Posterior cingulate gyrus (tissue), 11 donors: ENCODE measurements at regions of chr22 and their contacts with region 1.

Region 1: GRCh38 chr22:25048659-25049647 is 96.4 kb downstream of the KIAA1671 start:
- DNase-seq: peak in 9 of 10 donors; percentile 44 to 93 (median 75)

Region 2: GRCh38 chr22:24938741-24939341 is 110.1 kb before region 1 on chr22:
- intact Hi-C with region 1: loop called (anchors 2 kb)
- DNase-seq: peak in 1 of 10 donors; percentile 8

Region 3: DNA sequence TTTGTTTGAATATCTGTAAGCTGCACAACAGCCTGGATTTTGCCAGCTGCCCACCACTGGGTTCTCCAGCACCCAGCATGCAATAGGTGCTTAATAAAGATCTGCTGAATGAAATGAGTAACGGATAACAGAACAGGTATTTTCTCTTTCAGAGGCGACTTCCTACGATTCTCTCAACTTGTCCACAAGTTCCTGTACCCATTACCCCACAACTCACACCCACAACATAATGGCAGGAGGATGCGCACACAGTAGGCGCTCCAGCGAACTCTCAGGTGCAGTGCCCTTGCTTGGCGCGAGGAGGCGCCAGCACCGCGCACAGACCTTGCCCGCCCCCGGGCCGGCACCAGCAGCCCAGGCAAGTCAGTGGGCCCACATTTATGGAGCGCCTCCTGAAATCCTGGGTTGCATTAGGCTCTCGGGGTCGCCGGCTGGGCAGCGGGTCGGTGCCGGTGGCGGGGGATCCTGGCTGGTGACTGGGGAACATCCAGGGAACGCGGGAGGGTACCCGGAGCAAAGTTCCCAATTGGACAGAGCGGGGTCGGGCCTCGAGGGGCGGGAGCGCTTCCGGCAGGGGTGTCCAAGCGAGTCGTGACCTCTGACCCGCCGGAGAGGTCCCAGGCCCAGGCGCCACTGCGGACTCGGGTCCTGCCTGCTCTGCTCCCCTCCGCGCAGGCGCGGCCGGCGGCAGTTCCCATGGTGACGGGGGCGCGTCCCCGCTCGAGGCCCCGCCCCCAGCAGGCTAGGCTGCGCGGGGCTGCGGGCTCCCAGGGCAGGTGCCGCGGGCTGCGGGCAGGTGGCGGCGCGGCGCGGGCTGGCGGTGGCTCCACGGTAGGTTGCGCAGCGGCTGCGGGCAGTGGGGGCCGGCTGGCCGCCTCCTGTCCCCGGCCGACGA is 96.8 kb before region 1 on chr22 and contains the start of gene KIAA1671:
- intact Hi-C with region 1: loop called (anchors 1 kb)
- DNase-seq: peak; percentile 72 to 98 (median 85)

Region 4: DNA sequence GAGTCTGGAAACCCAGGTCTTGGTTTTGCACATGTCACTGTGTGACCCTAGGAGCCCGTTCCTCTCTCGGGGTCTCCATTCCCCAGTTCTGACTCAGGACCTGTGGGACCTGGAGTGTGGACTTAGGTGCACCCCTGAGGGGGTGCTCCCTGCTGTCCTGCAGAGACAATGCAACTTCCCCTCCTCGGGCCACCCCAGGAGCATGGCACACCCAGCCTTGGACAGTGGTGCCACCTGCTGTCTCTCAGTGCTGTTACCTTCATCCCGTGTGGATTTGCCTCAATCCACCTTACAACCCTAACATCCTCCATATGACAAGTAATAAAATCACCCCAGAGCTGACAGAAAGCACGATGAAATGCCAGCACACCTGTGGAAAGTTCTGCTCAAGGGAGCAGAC is 123.2 kb after region 1 on chr22:
- intact Hi-C with region 1: no loop called
- DNase-seq: peak in 1 of 10 donors; percentile 76